PC-3 (cell line): ENCODE measurements at regions of chr12 and their contacts with region 1.

Region 1: GRCh38 chr12:1650260-1650977 is 21.4 kb downstream of the WNT5B start:
- DNase-seq: no peak
- ATAC-seq: no peak
- H3K4me3 ChIP-seq: no peak overlapping the region
- H3K27ac ChIP-seq: no peak overlapping the region
- H3K4me1 ChIP-seq: peaks cover 11% of the 10 kb centered on the region
- H3K27me3 ChIP-seq: no peaks in the 10 kb centered on the region
- CTCF ChIP-seq: no peak

Region 2: GRCh38 chr12:1594261-1595025 is 56.0 kb before region 1 on chr12 and contains the start of gene FBXL14:
- CTCF ChIA-PET with region 1: no interaction called
- POLR2A ChIA-PET with region 1: no interaction called
- intact Hi-C with region 1: no loop called
- DNase-seq: peak; percentile 71
- ATAC-seq: peak; percentile 68
- H3K4me3 ChIP-seq: peak within 1 kb of the TSS; percentile 94
- H3K27ac ChIP-seq: peak within 1 kb of the TSS; percentile 19; the same call in 1 of the 2 replicates
- H3K4me1 ChIP-seq: peaks cover 31% of the 10 kb centered on the region
- H3K27me3 ChIP-seq: no peaks in the 10 kb centered on the region
- CTCF ChIP-seq: no peak
- total RNA-seq, gene FBXL14: 18.3 and 21.8 TPM in 2 replicates

Region 3: DNA sequence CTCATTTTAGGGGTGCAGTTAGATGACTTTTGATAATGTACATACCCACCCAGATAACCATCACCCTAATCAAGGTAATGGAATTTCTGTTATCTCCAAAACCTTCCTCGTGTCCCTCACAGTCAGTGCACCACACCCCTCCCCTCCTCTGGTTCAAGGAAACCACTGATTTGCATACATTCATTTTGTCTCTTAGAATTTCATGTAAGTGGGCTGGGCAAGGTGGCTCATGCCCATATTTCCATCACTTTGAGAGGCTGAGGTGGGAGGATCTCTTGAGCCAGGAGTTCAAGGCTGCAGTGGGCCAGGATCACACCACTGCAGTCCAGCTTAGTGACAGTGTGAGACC is 56.2 kb after region 1 on chr12:
- CTCF ChIA-PET with region 1: no interaction called
- POLR2A ChIA-PET with region 1: interaction called, 5 read pairs
- intact Hi-C with region 1: loop called (anchors 10 kb)
- DNase-seq: no peak
- ATAC-seq: peak; percentile 62
- H3K4me3 ChIP-seq: peak overlapping the region; percentile 48
- H3K27ac ChIP-seq: peak overlapping the region; percentile 99
- H3K4me1 ChIP-seq: peaks cover 41% of the 10 kb centered on the region
- H3K27me3 ChIP-seq: no peaks in the 10 kb centered on the region
- CTCF ChIP-seq: no peak

Region 4: DNA sequence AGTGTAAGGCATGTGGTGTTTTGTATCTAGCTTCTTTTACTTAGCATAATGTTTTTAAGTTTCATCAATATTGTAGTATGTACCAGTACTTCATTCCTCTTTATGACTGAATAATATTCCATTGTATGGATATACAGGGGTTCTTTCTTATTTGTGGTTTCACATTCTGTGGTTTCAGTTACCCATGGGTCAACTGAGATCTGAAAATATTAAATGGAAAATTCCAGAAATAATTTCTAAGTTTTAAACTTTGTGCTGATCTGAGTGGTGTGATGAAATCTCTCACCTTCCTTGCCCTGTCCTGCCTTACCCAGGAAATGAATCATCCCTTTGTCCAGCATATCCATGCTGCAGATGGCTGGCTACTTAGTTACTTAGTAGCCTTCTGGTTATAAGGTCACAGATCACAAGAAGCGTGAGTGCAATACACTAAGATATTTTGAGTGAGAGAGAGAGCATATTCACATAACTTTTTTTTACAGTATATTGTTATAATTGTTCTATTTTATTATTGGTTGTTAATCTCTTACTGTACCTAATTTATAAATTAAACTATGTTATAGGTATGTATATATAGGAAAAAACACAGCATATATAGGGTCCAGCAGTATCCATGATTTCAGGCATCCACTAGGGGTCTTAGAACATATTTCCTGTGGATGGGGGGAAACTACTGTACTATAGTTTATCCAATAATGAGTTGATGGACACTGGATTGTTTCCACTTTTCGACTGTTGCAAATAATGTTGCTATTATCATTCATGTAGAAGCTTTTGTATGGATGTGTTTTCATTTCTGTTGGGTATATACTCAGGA is 110.4 kb after region 1 on chr12:
- CTCF ChIA-PET with region 1: no interaction called
- POLR2A ChIA-PET with region 1: no interaction called
- intact Hi-C with region 1: no loop called
- DNase-seq: no peak
- ATAC-seq: peak; percentile 67
- H3K4me3 ChIP-seq: no peak overlapping the region
- H3K27ac ChIP-seq: no peak overlapping the region
- H3K4me1 ChIP-seq: peaks cover 1% of the 10 kb centered on the region; the same call in 1 of the 2 replicates
- H3K27me3 ChIP-seq: no peaks in the 10 kb centered on the region
- CTCF ChIP-seq: no peak

Region 5: DNA sequence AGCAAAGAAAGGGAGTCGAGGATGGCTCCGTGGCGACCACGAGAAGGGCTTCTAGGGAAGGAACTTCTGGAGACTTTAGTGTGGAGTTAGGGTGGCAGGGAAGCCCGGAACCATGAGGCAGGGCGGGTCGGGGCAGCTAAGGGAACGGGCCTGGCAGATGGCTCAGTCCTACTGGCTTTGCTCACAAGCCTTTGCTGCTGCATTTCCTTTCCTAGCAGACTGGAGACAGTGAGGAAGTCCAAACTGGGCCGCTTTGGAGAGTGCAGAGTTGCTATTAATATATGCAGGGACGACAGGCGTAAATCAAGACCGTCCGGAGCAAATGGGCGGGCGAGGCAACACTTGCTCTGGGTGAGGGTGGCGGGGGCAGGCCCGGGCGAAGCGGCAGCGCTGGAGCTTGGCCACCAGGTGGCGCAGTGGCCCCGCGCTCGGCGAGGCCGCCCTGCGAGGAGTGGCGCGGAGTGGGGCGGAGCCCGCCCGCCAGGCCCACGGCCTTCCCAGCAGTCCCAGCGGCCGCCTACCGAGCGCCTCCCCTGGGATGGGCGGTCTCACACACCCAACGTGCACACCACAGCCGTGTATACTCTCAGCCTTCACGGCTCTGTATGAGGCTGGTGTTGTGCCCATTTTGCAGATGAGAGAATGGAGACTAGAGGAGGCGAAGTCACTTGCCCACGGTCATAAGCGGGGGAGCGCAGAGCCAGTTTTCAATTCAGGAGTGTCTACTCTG is 145.5 kb after region 1 on chr12:
- CTCF ChIA-PET with region 1: interaction called, 32 read pairs
- POLR2A ChIA-PET with region 1: no interaction called
- intact Hi-C with region 1: loop called (anchors 1 kb)
- DNase-seq: peak; percentile 88
- ATAC-seq: peak; percentile 100
- H3K4me3 ChIP-seq: peak overlapping the region; percentile 58
- H3K27ac ChIP-seq: no peak overlapping the region
- H3K4me1 ChIP-seq: peaks cover 5% of the 10 kb centered on the region; the same call in 1 of the 2 replicates
- H3K27me3 ChIP-seq: no peaks in the 10 kb centered on the region
- CTCF ChIP-seq: peak; percentile 84

Region 6: DNA sequence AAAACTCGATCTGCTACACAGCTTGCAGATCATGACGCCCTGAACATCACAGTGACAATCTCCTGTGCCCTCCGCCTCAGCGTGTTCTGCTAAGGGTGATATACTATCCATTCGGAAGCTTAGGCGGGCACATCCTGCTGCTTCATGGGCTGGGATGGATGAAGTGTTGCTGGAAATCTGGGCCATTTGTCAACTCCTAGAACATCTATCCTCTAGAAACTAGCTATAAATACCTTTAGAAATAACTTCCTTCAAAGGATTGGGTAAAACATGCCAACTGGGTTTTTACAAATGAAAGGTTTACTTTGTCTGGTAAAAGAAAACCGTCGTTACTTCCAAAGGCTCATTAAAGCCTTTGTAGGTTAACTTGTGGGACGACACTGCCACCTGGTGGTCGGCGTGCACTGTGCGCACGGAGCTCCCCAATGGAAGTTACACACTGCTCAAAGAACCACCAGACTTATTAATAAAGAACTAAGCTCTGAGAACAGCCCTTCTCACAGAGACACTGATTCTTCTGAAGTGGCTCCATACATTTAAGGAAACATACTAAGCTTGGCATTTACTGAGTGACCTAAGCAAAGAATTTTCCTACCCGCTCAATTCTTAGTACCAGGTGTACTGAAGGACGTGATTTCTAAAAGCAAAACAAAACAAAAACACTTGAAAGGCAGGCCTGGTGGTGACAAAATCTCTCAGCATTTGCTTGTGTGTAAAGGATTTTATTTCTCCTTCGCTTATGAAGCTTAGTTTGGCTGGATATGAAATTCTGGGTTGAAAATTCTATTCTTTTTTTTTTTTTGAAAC is 289.6 kb after region 1 on chr12:
- CTCF ChIA-PET with region 1: interaction called, 20 read pairs
- POLR2A ChIA-PET with region 1: no interaction called
- intact Hi-C with region 1: loop called (anchors 10 kb)
- DNase-seq: peak; percentile 81
- ATAC-seq: peak; percentile 64
- H3K4me3 ChIP-seq: no peak overlapping the region
- H3K27ac ChIP-seq: no peak overlapping the region
- H3K4me1 ChIP-seq: peaks cover 21% of the 10 kb centered on the region
- H3K27me3 ChIP-seq: no peaks in the 10 kb centered on the region
- CTCF ChIP-seq: peak; percentile 91

Region 7: GRCh38 chr12:2034633-2035430 is 384.4 kb after region 1 on chr12:
- CTCF ChIA-PET with region 1: interaction called, 11 read pairs
- POLR2A ChIA-PET with region 1: no interaction called
- intact Hi-C with region 1: no loop called
- DNase-seq: peak; percentile 75
- ATAC-seq: peak; percentile 86
- H3K4me3 ChIP-seq: peak overlapping the region; percentile 40; the same call in 1 of the 2 replicates
- H3K27ac ChIP-seq: no peak overlapping the region
- H3K4me1 ChIP-seq: no peaks in the 10 kb centered on the region
- H3K27me3 ChIP-seq: peaks cover 83% of the 10 kb centered on the region
- CTCF ChIP-seq: peak; percentile 73